ENCODE measurements at regions of chr4 and their contacts with region 1.

Region 1: DNA sequence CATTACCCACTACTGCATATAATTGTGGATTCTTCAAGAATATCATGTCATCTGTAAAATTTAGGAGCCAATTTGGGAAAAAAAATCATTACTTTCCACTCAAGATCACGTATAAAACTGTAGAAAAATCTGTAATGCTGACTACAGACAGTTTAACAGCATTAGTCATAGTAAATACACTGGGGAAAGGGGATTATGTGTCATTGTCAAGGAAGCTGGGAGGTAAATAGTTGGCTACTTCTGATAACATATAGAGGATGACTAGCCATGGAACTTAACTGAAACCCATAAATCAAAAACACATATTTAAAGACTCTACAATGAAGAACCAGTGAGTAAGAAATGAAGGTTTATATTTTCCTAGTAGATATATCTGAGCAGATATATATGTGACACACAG is 1666.4 kb upstream of the IGFBP7 start:
- DNase-seq: no peak
- ATAC-seq: no peak
- H3K4me3 ChIP-seq: no peak overlapping the region
- H3K27ac ChIP-seq: no peak overlapping the region
- H3K4me1 ChIP-seq: no peaks in the 10 kb centered on the region
- H3K27me3 ChIP-seq: no peaks in the 10 kb centered on the region
- CTCF ChIP-seq: no peak
- POLR2A ChIP-seq: no peak

Region 2: GRCh38 chr4:58723954-58724353 is 52.7 kb before region 1 on chr4:
- intact Hi-C with region 1: loop called in 1 of 10 experiments (anchors 10 kb)
- DNase-seq: peak in 1 of 5 donors; percentile 50
- ATAC-seq: no peak
- H3K4me3 ChIP-seq: no peak overlapping the region
- H3K27ac ChIP-seq: no peak overlapping the region
- H3K4me1 ChIP-seq: no peaks in the 10 kb centered on the region
- H3K27me3 ChIP-seq: no peaks in the 10 kb centered on the region
- CTCF ChIP-seq: no peak
- POLR2A ChIP-seq: no peak